ENCODE measurements at regions of chr3 and their contacts with region 1.

Region 1: GRCh38 chr3:13091898-13092611 is 18.8 kb upstream of the IQSEC1 start:
- DNase-seq: peak; percentile 88
- ATAC-seq: peak; percentile 91
- H3K4me3 Mint-ChIP-seq: no peak overlapping the region
- H3K27ac Mint-ChIP-seq: peak overlapping the region; percentile 51
- H3K4me1 Mint-ChIP-seq: peaks cover 21% of the 10 kb centered on the region
- H3K27me3 Mint-ChIP-seq: peaks cover 21% of the 10 kb centered on the region

Region 2: DNA sequence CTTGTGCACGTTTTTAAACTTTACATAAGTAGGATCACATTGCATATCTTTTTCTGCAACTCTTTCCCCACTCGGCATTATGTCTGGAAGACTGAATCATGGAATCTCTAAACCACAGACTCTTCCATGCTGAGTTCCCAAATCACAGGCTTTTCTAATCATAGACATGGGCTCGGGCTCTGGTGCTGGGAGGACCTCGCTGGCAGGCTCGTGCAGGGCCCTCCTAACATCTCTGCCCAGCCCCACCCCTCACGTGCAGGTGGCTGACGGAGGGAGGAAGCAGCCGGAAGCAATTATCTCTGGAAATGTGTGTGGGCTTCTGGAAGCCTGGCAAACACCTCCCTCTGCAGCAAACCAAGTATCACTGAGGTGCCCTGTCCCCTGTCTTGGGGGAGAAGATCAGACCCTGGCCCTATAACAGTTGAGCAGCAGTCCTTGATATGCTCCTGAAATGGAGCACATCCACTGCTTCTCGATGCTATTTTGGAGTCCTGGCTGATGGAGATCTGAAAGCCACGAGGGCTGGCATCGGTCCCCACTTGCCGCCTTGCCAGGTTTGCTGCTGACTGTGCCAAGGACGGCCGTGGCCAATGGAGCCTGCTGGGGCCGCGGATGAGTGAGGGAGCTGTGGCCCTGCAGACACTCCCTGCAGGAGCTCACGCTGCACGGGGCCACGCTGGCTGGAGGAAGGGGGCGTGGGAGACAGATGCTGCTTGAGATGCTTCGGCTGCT is 14.5 kb before region 1 on chr3:
- CTCF ChIA-PET with region 1: interaction called, 33 read pairs
- POLR2A ChIA-PET with region 1: no interaction called
- DNase-seq: no peak
- ATAC-seq: no peak
- H3K4me3 Mint-ChIP-seq: peak overlapping the region; percentile 43
- H3K27ac Mint-ChIP-seq: peak overlapping the region; percentile 89
- H3K4me1 Mint-ChIP-seq: peaks cover 39% of the 10 kb centered on the region
- H3K27me3 Mint-ChIP-seq: peaks cover 20% of the 10 kb centered on the region

Region 3: DNA sequence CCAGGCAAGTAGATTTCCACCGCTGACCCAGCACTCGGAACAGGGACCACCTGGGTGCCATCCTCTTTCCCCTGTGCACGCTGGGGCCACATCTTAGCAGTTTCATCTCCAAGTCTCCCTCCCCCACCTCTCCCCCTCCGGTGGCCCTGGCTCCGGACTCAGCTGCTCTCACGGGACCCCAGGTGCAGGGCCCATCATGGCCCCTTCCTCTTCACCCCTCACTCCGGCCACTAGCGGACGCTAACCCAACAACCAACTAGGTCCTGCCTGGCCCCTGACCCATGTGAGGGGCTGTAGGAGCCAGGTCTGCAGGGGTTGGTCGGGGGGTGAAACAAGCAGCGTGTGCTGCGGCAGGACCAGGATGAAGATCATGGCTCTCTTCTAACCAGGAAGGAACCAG is 12.5 kb after region 1 on chr3:
- CTCF ChIA-PET with region 1: interaction called, 16 read pairs
- POLR2A ChIA-PET with region 1: no interaction called
- DNase-seq: no peak
- ATAC-seq: no peak
- H3K4me3 Mint-ChIP-seq: no peak overlapping the region
- H3K27ac Mint-ChIP-seq: no peak overlapping the region
- H3K4me1 Mint-ChIP-seq: no peaks in the 10 kb centered on the region
- H3K27me3 Mint-ChIP-seq: no peaks in the 10 kb centered on the region

Region 4: GRCh38 chr3:13110678-13111116 is 18.6 kb after region 1 on chr3:
- CTCF ChIA-PET with region 1: interaction called, 15 read pairs
- POLR2A ChIA-PET with region 1: no interaction called
- DNase-seq: peak; percentile 39
- ATAC-seq: peak; percentile 70
- H3K4me3 Mint-ChIP-seq: no peak overlapping the region
- H3K27ac Mint-ChIP-seq: no peak overlapping the region
- H3K4me1 Mint-ChIP-seq: peaks cover 6% of the 10 kb centered on the region
- H3K27me3 Mint-ChIP-seq: no peaks in the 10 kb centered on the region

Region 5: GRCh38 chr3:13229273-13229949 is 137.4 kb after region 1 on chr3:
- CTCF ChIA-PET with region 1: interaction called, 16 read pairs
- POLR2A ChIA-PET with region 1: no interaction called
- DNase-seq: peak; percentile 47
- ATAC-seq: peak; percentile 63
- H3K4me3 Mint-ChIP-seq: no peak overlapping the region
- H3K27ac Mint-ChIP-seq: no peak overlapping the region
- H3K4me1 Mint-ChIP-seq: peaks cover 15% of the 10 kb centered on the region
- H3K27me3 Mint-ChIP-seq: peaks cover 21% of the 10 kb centered on the region

Region 6: GRCh38 chr3:13346481-13347389 is 254.7 kb after region 1 on chr3:
- CTCF ChIA-PET with region 1: interaction called, 14 read pairs
- POLR2A ChIA-PET with region 1: no interaction called
- DNase-seq: peak; percentile 87
- ATAC-seq: peak; percentile 80
- H3K4me3 Mint-ChIP-seq: peak overlapping the region; percentile 20
- H3K27ac Mint-ChIP-seq: peak overlapping the region; percentile 91
- H3K4me1 Mint-ChIP-seq: peaks cover 72% of the 10 kb centered on the region
- H3K27me3 Mint-ChIP-seq: no peaks in the 10 kb centered on the region

Region 7: DNA sequence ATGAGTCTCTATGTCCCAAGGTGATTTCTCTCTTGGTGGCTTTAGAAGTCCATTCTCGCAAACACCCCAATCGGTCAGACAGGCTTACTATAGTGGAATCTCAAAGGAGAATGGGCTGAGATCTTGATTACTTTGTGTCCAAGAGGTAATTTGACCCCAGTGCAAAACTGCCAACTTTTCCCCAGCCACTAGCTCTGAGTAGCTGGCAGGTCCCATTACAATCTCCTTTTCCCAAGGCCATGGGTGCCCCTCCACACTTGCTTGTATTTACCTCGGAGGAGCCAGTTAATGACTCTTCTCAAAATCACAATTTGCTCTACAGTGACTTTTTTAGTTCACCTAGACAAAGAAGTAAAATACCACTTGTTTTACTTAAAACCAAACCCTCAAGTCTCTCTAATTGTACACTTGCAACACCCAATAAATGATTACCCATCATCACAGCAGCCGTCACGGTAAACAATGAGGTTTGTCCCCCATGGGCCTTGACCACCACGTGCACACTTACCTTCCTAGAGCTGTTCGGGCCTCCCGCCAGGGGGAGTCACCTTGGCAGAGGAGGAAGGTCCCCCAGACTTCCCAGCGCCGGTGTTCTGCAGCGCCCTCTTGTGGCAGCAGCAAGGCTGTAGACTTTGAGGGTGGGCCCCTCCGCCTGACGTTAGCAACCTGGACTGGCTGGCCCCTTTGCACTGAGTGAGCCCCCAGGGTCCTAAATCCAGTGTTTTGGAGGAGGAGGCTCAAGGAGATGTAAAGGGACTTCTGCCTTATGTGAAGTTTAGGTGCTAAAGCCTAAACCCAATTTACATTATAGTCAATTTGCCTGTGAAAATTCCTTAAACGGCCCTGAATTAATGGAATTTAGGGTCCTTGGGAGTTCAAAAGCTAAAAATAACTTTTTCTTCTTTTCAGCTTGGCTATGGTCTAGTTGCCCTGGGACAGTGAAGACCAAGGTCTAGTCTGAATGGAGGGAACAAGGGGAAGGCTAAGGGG is 369.4 kb after region 1 on chr3:
- CTCF ChIA-PET with region 1: interaction called, 14 read pairs
- POLR2A ChIA-PET with region 1: no interaction called
- DNase-seq: peak; percentile 85
- ATAC-seq: peak; percentile 96
- H3K4me3 Mint-ChIP-seq: no peak overlapping the region
- H3K27ac Mint-ChIP-seq: no peak overlapping the region
- H3K4me1 Mint-ChIP-seq: no peaks in the 10 kb centered on the region
- H3K27me3 Mint-ChIP-seq: peaks cover 10% of the 10 kb centered on the region